ENCODE measurements at regions of chr16 and their contacts with region 1.

Region 1: GRCh38 chr16:30005341-30006094 is 5.3 kb downstream of the DOC2A start:
- H3K4me3 Mint-ChIP-seq: no peak overlapping the region
- H3K27ac Mint-ChIP-seq: no peak overlapping the region
- H3K4me1 Mint-ChIP-seq: peaks cover 9% of the 10 kb centered on the region
- H3K27me3 Mint-ChIP-seq: peaks cover 30% of the 10 kb centered on the region

Region 2: GRCh38 chr16:29915590-29916247 is 89.8 kb before region 1 on chr16:
- intact Hi-C with region 1: loop called (anchors 10 kb)
- H3K4me3 Mint-ChIP-seq: no peak overlapping the region
- H3K27ac Mint-ChIP-seq: no peak overlapping the region
- H3K4me1 Mint-ChIP-seq: peaks cover 8% of the 10 kb centered on the region
- H3K27me3 Mint-ChIP-seq: no peaks in the 10 kb centered on the region

Measured in dendritic cell treated with granulocyte-macrophage colony-stimulating factor and Interleukin-4, amounts not matched to agents 40 ng/mL and 50 ng/mL, for 4 days (primary cell).